CD4-positive, alpha-beta T cell (primary cell): ENCODE measurements at regions of chr9 and their contacts with region 1.

Region 1: DNA sequence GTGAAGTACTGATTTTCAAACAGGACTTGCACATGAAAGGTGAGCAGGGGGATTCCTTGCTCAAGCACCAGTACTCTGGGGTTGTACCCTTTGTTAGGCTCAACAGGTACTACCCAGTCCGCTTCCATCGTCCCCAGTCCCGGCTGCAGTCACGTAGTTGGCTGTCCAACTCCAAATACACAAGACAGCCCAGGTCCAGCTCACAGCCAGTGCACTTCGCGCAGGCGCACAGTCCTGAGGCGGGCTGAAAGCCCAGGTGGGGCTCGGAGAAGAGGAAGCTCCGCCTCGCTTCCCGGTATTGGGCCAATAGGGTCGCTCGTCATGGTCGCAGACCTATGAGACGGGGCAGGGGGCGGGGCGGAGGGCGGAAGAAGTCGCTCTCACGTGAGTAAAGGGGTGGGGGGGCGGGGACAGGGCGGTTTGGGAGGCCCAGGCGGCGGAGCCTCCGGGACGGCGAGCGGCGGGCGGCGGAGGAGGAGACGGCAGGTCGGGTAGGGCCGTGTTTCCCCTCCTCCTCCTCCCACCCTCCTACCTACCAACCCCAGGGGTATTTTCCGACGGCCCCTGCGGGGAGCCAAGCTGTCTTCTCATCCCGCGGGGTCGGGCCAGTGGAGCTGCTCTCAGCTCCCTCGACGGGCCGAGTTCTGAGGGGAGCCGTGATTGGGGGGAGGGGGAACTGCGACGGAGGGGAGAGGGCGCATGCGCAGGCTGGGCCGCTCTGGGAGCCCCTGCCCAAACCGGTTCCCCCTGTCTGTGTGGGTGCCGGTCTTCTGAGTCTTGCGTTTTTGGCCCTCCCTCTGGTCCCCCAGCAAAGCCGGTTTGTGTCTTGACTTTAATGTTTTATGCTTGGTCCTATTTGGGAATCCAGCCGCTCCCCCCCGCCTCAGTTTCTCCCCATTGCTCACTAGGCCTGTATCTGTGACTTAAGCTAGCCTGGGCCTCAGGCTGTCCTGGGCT is at the start of gene RABGAP1:
- DNase-seq: peak; percentile 95 to 99 (median 98)
- ATAC-seq: peak; percentile 98
- H3K4me3 ChIP-seq: peak within 1 kb of the TSS; percentile 89
- H3K4me3 Mint-ChIP-seq: peak within 1 kb of the TSS; percentile 91
- H3K27ac ChIP-seq: peak within 1 kb of the TSS; percentile 57 to 80
- H3K27ac Mint-ChIP-seq: peak within 1 kb of the TSS; percentile 88
- H3K4me1 ChIP-seq: peaks cover 19% of the 10 kb centered on the region
- H3K4me1 Mint-ChIP-seq: peaks cover 42% of the 10 kb centered on the region
- H3K27me3 ChIP-seq: no peaks in the 10 kb centered on the region
- H3K27me3 Mint-ChIP-seq: no peaks in the 10 kb centered on the region
- CTCF ChIP-seq: no peak
- total RNA-seq, gene RABGAP1: 20.6 to 24.9 TPM

Region 2: GRCh38 chr9:122807271-122807930 is 133.5 kb before region 1 on chr9:
- CTCF ChIA-PET with region 1: no interaction called
- POLR2A ChIA-PET with region 1: no interaction called
- intact Hi-C with region 1: no loop called
- DNase-seq: no peak
- ATAC-seq: no peak
- H3K4me3 ChIP-seq: no peak overlapping the region
- H3K4me3 Mint-ChIP-seq: no peak overlapping the region
- H3K27ac ChIP-seq: no peak overlapping the region
- H3K27ac Mint-ChIP-seq: no peak overlapping the region
- H3K4me1 ChIP-seq: peaks cover 14% of the 10 kb centered on the region
- H3K4me1 Mint-ChIP-seq: peaks cover 19% of the 10 kb centered on the region
- H3K27me3 ChIP-seq: no peaks in the 10 kb centered on the region
- H3K27me3 Mint-ChIP-seq: no peaks in the 10 kb centered on the region
- CTCF ChIP-seq: no peak

Region 3: GRCh38 chr9:122904823-122905710 is 35.8 kb before region 1 on chr9 and contains the start of gene RC3H2:
- CTCF ChIA-PET with region 1: interaction called, 6 read pairs
- POLR2A ChIA-PET with region 1: interaction called, 53 read pairs
- intact Hi-C with region 1: loop called in 1 of 2 experiments (anchors 2 kb)
- DNase-seq: peak; percentile 91 to 100 (median 94)
- ATAC-seq: peak; percentile 92
- H3K4me3 ChIP-seq: peak within 1 kb of the TSS; percentile 89
- H3K4me3 Mint-ChIP-seq: peak within 1 kb of the TSS; percentile 100
- H3K27ac ChIP-seq: peak within 1 kb of the TSS; percentile 87
- H3K27ac Mint-ChIP-seq: peak within 1 kb of the TSS; percentile 99
- H3K4me1 ChIP-seq: peaks cover 11% of the 10 kb centered on the region
- H3K4me1 Mint-ChIP-seq: peaks cover 36% of the 10 kb centered on the region
- H3K27me3 ChIP-seq: no peaks in the 10 kb centered on the region
- H3K27me3 Mint-ChIP-seq: no peaks in the 10 kb centered on the region
- CTCF ChIP-seq: no peak
- total RNA-seq, gene RC3H2: 85.2 to 86.8 TPM

Region 4: GRCh38 chr9:122912964-122913673 is 27.8 kb before region 1 on chr9 and contains the start of gene ZBTB6:
- CTCF ChIA-PET with region 1: interaction called, 3 read pairs
- POLR2A ChIA-PET with region 1: interaction called, 44 read pairs
- intact Hi-C with region 1: loop called (anchors 2 kb)
- DNase-seq: peak; percentile 52 to 89 (median 64)
- ATAC-seq: peak; percentile 98
- H3K4me3 ChIP-seq: peak within 1 kb of the TSS; percentile 78
- H3K4me3 Mint-ChIP-seq: peak within 1 kb of the TSS; percentile 96
- H3K27ac ChIP-seq: peak within 1 kb of the TSS; percentile 86 to 88
- H3K27ac Mint-ChIP-seq: peak within 1 kb of the TSS; percentile 88
- H3K4me1 ChIP-seq: peaks cover 11% of the 10 kb centered on the region
- H3K4me1 Mint-ChIP-seq: peaks cover 29% of the 10 kb centered on the region
- H3K27me3 ChIP-seq: no peaks in the 10 kb centered on the region
- H3K27me3 Mint-ChIP-seq: no peaks in the 10 kb centered on the region
- CTCF ChIP-seq: no peak
- total RNA-seq, gene ZBTB6: 3.6 to 3.9 TPM